Activated CD4-positive, alpha-beta T cell treated with anti-CD3 and anti-CD28 coated beads, Interleukin-2, amount 10 ng/mL, durations not matched to agents 7 days and 5 days (primary cell): ENCODE measurements at regions of chr7 and their contacts with region 1.

Region 1: GRCh38 chr7:149005241-149006050 is 22.9 kb downstream of the PDIA4 start:
- DNase-seq: peak; percentile 85
- H3K4me3 Mint-ChIP-seq: no peak overlapping the region
- H3K27ac Mint-ChIP-seq: no peak overlapping the region
- H3K4me1 Mint-ChIP-seq: peaks cover 8% of the 10 kb centered on the region
- H3K27me3 Mint-ChIP-seq: no peaks in the 10 kb centered on the region

Region 2: DNA sequence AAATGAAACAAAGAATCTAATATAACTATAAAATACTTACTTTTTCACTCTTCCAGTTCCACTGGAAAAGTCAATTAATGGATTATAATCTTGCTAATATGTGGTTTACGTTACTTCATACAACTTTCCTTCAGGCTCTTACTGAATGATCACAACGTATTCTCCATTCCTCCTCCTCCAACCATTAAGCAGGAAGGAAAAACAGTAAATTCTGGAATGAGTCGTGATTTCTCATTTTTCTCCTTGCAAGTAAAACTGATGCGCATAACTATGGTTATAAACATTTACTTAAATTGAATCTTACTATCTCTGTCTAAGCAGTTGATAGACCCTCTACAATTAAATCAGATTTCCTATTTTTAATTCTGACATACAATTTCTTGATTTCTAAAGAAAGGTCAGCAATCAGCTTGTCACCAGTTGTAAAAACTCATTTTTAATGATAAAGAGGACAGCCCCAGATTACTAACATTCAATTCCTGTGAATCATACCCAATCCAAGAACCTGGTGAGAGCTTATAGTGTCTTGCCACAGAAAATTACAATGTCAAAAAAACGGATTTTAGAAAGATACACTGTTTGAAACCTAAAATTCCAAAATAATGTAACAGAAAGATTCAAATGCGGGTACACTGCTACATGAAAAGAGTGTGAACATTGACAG is 185.6 kb before region 1 on chr7:
- CTCF ChIA-PET with region 1: no interaction called
- POLR2A ChIA-PET with region 1: no interaction called
- DNase-seq: no peak
- H3K4me3 Mint-ChIP-seq: no peak overlapping the region
- H3K27ac Mint-ChIP-seq: no peak overlapping the region
- H3K4me1 Mint-ChIP-seq: peaks cover 13% of the 10 kb centered on the region
- H3K27me3 Mint-ChIP-seq: no peaks in the 10 kb centered on the region

Region 3: DNA sequence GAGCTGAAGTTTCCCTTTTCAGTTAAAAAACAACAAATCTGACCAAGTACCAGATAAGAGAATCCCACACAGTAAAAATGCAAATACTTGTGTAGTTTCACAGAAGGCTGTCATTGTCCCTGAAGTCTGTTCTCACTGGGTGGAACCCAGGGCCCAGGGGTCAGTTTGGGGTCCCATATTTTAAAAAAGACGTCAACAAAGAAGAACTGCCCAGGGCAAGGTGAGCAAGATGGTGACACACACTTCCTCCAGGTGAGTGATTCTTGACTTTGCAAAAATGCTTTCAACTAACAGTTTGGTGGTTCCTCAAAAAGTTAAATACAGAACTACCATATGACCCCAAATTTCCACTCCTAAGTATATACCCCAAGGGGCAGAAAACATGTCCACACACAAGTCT is 13.9 kb before region 1 on chr7:
- CTCF ChIA-PET with region 1: interaction called, 10 read pairs
- POLR2A ChIA-PET with region 1: no interaction called
- DNase-seq: no peak
- H3K4me3 Mint-ChIP-seq: no peak overlapping the region
- H3K27ac Mint-ChIP-seq: no peak overlapping the region
- H3K4me1 Mint-ChIP-seq: peaks cover 23% of the 10 kb centered on the region
- H3K27me3 Mint-ChIP-seq: peaks cover 6% of the 10 kb centered on the region

Region 4: DNA sequence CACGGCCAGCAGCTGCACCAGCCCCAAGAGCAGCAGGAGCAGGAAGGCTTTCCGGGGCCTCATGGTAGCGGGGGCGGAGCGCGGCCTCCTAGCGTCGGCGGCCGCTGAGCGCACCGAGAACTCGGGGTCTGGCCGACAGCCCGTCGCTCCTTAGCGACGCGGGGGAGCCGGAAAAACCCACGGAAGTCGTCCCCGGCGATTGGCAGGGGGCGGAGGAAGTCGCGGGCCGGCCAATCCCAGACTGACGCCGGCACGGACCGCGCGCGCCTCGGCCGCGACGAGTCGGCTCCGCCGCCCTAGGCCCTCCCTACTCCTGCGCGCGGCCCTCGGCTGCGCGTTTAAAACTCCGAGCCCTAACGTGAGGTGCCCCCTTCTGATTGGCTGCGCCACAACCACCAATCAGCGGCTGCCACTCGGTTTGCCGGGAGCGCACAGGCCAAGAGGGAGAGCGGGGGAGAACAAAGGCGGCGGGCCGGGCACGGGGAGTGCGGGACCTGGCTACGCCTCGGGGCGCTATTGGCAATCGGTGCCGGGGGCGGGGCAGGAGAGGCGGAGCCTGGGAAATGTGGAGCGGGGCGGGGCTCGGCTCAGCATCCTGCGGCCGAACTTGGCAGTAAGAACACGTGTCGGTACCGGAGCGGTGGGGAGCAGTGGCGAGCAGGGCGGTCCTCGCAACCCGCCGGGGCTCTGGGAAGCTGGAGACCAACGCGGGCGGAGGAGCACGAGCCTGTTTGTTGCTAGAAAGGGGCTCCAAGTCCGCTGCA is 23.1 kb after region 1 on chr7 and contains the start of gene PDIA4:
- CTCF ChIA-PET with region 1: interaction called, 14 read pairs
- POLR2A ChIA-PET with region 1: no interaction called
- DNase-seq: peak; percentile 100
- H3K4me3 Mint-ChIP-seq: peak within 1 kb of the TSS; percentile 96
- H3K27ac Mint-ChIP-seq: peak within 1 kb of the TSS; percentile 94
- H3K4me1 Mint-ChIP-seq: peaks cover 40% of the 10 kb centered on the region
- H3K27me3 Mint-ChIP-seq: no peaks in the 10 kb centered on the region
- total RNA-seq, gene PDIA4: 94.8 to 97.4 TPM